Activated B cell treated with CpG ODN at 0.5 μM for 24 hours (primary cell): ENCODE measurements at regions of chr1 and their contacts with region 1.

Region 1: DNA sequence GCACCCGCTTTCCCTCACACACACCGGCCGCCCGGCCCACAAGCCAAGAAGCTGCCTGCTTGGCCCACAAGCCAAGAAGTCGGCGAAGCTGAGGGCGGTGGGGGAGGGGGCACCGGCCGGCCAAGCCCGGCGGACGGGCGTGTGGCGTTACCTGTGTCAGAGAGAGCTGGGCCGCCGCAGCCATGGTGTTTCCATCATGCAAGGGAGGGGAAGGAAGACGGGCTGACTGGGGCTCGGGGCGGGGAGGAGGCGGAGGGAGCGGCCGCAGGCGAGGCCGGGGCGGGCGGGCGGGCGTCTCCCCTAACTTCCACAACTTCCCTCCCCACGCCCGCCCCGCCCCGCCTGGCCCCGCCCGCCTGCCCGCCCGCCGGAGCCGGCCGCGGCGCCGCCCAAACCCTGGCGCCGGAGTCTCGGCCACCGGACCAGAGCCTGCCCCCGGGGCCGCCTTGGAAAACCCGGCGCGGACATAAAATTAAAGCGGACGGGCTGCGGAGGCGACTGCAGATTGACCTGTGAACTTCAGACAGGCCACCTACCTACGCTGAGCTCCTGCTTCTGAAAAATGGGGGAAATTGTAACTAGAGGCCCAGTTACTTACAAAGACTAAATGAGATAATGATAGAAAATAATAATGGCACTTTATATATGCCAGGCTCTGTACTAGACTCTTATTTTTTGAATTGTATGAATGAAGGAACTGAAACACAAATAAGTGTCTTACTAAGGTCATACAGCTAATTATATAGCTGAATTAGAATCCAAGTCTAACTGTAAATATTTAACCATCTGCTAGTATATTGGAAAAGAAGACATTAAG is at the start of gene EPS15:
- DNase-seq: peak; percentile 84
- ATAC-seq: peak; percentile 79
- H3K4me3 Mint-ChIP-seq: peak within 1 kb of the TSS; percentile 97
- H3K27ac Mint-ChIP-seq: peak within 1 kb of the TSS; percentile 87
- H3K4me1 Mint-ChIP-seq: peaks cover 55% of the 10 kb centered on the region
- H3K27me3 Mint-ChIP-seq: no peaks in the 10 kb centered on the region
- CTCF ChIP-seq: no peak
- total RNA-seq, gene EPS15: 150 and 151 TPM in 2 replicates

Region 2: GRCh38 chr1:51235673-51236530 is 283.4 kb before region 1 on chr1 and contains the start of gene RNF11:
- CTCF ChIA-PET with region 1: no interaction called
- POLR2A ChIA-PET with region 1: no interaction called
- intact Hi-C with region 1: loop called (anchors 5 kb)
- DNase-seq: peak; percentile 94
- ATAC-seq: peak; percentile 74
- H3K4me3 Mint-ChIP-seq: peak within 1 kb of the TSS; percentile 92
- H3K27ac Mint-ChIP-seq: peak within 1 kb of the TSS; percentile 93
- H3K4me1 Mint-ChIP-seq: peaks cover 24% of the 10 kb centered on the region
- H3K27me3 Mint-ChIP-seq: peaks cover 4% of the 10 kb centered on the region
- CTCF ChIP-seq: no peak
- total RNA-seq, gene RNF11: 15.3 and 17.1 TPM in 2 replicates

Region 3: DNA sequence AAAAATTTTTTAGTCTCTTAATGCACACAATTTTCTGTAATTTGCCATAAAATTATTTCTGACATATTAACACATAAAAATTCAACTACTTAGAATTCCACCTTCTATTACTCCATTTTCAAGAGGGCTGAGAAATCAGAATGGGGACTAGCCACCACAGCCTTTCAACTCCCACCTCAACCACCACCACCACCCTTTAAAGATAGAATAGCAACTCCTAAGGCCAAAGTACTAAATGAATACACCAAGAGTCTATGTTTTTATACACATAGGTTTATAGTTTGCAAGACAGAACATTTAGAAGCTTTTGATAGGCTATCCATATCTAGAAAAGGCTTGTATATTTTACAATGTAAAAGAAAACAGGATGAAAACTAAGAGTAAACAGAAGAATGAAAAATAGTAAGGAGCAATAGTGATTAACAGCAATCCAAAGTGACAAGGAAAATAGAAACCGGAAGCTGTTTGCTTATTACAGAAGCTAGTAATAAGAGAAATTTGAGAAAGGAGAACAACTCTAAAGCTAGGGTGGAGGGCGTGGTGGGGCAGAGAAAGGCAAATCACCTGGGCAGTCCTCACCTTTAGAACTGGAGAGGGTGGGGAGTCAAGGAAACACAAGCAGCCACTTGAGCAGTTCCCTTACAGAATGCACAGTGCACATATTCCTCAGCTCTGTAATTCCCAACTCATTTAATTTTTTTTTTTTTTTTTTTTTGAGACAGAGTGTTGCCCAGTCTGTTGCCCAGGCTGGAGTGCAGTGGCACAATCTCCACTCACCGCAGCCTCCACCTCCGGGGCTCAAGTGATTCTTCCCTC is 27.9 kb before region 1 on chr1:
- CTCF ChIA-PET with region 1: no interaction called
- POLR2A ChIA-PET with region 1: interaction called, 41 read pairs
- intact Hi-C with region 1: loop called (anchors 1 kb)
- DNase-seq: no peak
- ATAC-seq: peak; percentile 65
- H3K4me3 Mint-ChIP-seq: peak overlapping the region; percentile 68
- H3K27ac Mint-ChIP-seq: peak overlapping the region; percentile 85
- H3K4me1 Mint-ChIP-seq: peaks cover 69% of the 10 kb centered on the region
- H3K27me3 Mint-ChIP-seq: no peaks in the 10 kb centered on the region
- CTCF ChIP-seq: no peak

Region 4: DNA sequence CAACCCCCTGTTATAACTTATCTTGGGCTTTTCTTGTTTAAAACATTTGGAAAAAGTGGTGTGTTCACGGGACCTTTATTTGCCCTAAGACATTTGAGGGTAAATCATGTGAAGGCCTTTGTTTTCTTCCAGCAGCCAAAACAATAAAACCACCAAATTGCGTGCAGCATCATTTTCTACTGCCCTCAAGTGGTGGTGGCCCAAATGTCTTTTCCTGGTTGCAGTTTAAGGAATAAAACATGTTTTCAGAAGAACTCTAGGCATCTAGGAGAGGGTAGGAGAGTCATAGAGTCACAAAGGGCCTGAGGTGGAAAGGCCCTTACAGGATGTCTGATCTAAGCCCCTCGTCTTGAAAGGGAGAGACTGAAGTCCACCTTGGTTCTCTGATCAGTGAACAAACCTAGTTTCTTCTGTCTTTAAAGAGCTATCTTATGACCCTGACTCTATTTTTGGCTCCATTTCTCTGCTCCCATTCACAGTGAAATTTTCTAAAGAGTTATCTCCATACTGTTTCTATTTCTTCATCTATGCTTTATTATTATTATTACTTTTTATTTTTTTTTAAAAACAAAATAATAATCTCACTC is 15.8 kb after region 1 on chr1:
- CTCF ChIA-PET with region 1: interaction called, 4 read pairs
- POLR2A ChIA-PET with region 1: no interaction called
- intact Hi-C with region 1: loop called (anchors 2 kb)
- DNase-seq: no peak
- ATAC-seq: peak; percentile 58
- H3K4me3 Mint-ChIP-seq: no peak overlapping the region
- H3K27ac Mint-ChIP-seq: peak overlapping the region; percentile 54
- H3K4me1 Mint-ChIP-seq: peaks cover 11% of the 10 kb centered on the region
- H3K27me3 Mint-ChIP-seq: no peaks in the 10 kb centered on the region
- CTCF ChIP-seq: no peak

Region 5: GRCh38 chr1:51578383-51579082 is 59.3 kb after region 1 on chr1:
- CTCF ChIA-PET with region 1: no interaction called
- POLR2A ChIA-PET with region 1: interaction called, 10 read pairs
- intact Hi-C with region 1: no loop called
- DNase-seq: no peak
- ATAC-seq: peak; percentile 39
- H3K4me3 Mint-ChIP-seq: peak overlapping the region; percentile 40
- H3K27ac Mint-ChIP-seq: peak overlapping the region; percentile 86
- H3K4me1 Mint-ChIP-seq: peaks cover 56% of the 10 kb centered on the region
- H3K27me3 Mint-ChIP-seq: no peaks in the 10 kb centered on the region
- CTCF ChIP-seq: no peak

Region 6: GRCh38 chr1:51729156-51729823 is 210.0 kb after region 1 on chr1:
- CTCF ChIA-PET with region 1: no interaction called
- POLR2A ChIA-PET with region 1: interaction called, 8 read pairs
- intact Hi-C with region 1: loop called (anchors 1 kb)
- DNase-seq: peak; percentile 89
- ATAC-seq: peak; percentile 96
- H3K4me3 Mint-ChIP-seq: peak overlapping the region; percentile 95
- H3K27ac Mint-ChIP-seq: peak overlapping the region; percentile 87
- H3K4me1 Mint-ChIP-seq: peaks cover 48% of the 10 kb centered on the region
- H3K27me3 Mint-ChIP-seq: no peaks in the 10 kb centered on the region
- CTCF ChIP-seq: no peak

Region 7: GRCh38 chr1:51878616-51879336 is 359.5 kb after region 1 on chr1 and contains the start of gene NRDC:
- CTCF ChIA-PET with region 1: no interaction called
- POLR2A ChIA-PET with region 1: no interaction called
- intact Hi-C with region 1: loop called (anchors 1 kb)
- DNase-seq: peak; percentile 93
- ATAC-seq: peak; percentile 90
- H3K4me3 Mint-ChIP-seq: no peak within 1 kb of the TSS
- H3K27ac Mint-ChIP-seq: no peak within 1 kb of the TSS
- H3K4me1 Mint-ChIP-seq: peaks cover 29% of the 10 kb centered on the region
- H3K27me3 Mint-ChIP-seq: no peaks in the 10 kb centered on the region
- CTCF ChIP-seq: no peak
- total RNA-seq, gene NRDC: 157 and 162 TPM in 2 replicates